HepG2 (cell line): ENCODE measurements at regions of chr5 and their contacts with region 1.

Region 1: DNA sequence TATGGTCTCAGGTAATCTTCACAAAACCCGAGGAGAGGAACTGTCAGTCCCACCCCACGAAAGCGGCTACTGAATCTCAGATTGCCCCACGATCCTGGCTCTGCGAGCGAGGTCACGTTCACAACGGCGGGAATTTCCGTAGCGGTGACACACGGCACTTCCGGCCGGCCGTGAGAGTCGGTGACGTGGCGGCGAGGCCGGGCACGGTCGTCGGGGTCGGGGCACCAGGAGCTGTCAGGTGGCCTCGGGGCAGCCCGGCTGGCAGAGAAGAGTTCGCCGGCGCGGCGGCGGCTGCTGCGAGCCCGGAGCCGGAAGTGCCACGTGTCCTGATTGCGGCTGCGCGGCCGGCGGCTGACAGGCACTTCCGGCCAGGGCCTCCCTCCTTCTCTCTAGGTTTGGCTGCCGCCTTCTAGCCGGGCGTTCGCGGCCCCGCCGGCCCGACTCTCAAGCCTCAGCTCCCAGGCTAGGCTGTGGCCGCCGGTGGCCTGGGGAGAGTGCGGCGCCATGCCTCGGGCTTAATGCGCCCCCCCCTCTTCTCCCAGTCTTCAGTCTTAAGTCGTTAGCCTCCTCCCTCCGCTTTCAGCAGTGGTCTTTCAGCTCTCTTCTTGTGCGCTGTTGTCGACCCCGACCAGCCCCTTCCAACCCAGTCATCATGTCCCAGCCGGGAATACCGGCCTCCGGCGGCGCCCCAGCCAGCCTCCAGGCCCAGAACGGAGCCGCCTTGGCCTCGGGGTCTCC is at the start of gene SEC24A:
- DNase-seq: peak; percentile 89
- ATAC-seq: peak; percentile 93
- H3K4me3 ChIP-seq: peak within 1 kb of the TSS; percentile 79 to 97 (median 97)
- H3K27ac ChIP-seq: peak within 1 kb of the TSS; percentile 99
- H3K4me1 ChIP-seq: peaks cover 67% of the 10 kb centered on the region
- H3K27me3 ChIP-seq: no peaks in the 10 kb centered on the region
- CTCF ChIP-seq: no peak; the same call in 1 of the 2 replicates
- EP300 ChIP-seq: peak in 1 of 2 experiments; percentile 46; a peak in 1 of 4 replicates
- POLR2A ChIP-seq: peak; percentile 69 to 88
- RAD21 ChIP-seq: peak; percentile 71
- total RNA-seq, gene SEC24A: 30.5 and 56.6 TPM in 2 replicates

Region 2: DNA sequence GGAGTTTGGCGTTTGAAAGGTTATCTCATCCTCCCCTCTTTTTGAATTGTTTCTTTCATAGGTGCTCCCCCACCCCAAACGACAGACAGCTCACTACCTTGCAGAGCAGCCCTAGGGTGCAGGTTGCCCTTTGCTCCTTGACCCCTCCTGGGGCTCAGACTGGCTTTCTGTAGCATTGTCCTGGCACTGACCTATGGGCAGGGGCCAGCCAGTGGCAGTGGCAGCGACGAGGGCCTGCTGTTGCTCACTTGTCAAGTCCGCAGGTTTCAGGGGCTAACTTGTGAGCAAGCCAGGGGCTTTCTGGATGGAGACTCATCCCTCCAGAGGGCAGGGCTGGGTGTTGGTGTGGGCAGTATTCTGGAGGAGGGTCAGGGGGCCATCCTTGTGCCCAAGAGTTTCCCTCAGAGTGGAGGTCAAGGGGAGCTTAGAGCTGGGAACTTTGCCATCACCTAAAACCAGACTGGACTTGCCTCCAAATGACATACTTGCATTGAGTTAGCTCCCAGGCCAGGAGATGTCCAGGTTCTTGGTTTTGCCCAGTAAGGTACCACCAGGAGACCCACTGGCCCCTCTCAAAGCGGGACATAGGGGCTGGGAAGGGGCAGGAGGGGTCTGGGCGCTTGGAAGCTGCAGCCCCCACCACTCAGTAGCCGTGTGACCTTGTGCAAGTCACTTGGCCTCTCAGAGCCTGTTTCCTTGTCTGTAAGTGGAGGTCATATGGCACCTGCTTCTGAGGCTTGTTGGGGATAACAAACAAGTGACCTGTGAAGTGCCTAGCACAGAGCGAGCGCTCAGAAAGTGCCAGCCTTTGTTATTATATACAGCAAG is 183.4 kb before region 1 on chr5:
- CTCF ChIA-PET with region 1: no interaction called
- POLR2A ChIA-PET with region 1: no interaction called
- in situ Hi-C with region 1: no loop called
- intact Hi-C with region 1: no loop called
- DNase-seq: peak; percentile 8
- ATAC-seq: peak; percentile 25
- H3K4me3 ChIP-seq: peak overlapping the region; percentile 81 to 83 (median 82)
- H3K27ac ChIP-seq: peak overlapping the region; percentile 95
- H3K4me1 ChIP-seq: peaks cover 31% of the 10 kb centered on the region
- H3K27me3 ChIP-seq: peaks cover 0 to 8% of the 10 kb centered on the region in 2 experiments; a peak in 3 of 5 replicates
- CTCF ChIP-seq: no peak
- EP300 ChIP-seq: no peak
- POLR2A ChIP-seq: no peak
- RAD21 ChIP-seq: no peak

Region 3: DNA sequence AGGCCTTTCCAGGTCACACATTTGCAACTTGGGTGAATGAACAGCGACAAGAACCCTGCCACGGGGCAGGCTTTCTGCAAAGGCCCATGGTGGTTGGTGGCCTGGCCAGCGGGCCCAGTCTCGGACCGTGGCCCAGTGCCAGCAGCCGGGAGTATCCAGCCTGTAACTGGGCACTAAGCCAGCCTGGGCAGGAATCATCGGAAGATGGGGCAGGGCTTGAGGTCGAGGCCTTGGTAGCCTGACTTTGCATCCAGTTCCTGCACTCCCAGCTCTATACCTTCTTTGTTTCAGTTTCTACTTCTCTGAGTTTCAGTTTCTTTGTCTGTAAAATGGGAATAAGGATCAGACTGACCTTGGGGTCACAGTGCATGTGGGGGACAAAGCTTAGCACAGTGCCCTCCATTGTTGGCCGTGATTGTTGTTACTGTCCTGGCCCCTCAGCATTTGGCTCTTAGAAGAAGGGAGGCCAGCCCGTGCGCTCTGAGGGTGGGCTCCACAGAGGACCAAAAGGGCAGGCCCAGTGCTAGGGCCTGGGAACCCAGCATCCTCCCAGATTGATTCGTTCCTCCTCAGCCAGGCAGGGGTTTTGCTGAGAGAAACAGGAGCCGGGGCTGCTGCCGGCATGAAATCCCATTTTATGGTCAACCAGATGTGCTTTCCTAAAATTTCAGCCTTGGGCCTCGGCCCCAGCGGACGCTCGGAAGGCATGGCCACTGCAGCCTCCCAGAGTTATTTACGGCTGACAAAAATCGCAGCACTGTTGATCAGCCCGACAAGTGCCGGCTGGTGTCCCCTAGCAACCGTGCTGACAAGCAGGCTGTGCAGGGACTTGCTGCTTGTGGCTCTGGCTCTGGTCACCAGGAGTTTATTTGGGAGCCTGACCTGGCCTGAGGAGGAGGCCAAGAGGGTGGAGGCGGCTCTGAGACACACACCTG is 79.6 kb before region 1 on chr5:
- CTCF ChIA-PET with region 1: no interaction called
- POLR2A ChIA-PET with region 1: no interaction called
- in situ Hi-C with region 1: no loop called
- intact Hi-C with region 1: no loop called
- DNase-seq: no peak
- ATAC-seq: no peak
- H3K4me3 ChIP-seq: no peak overlapping the region
- H3K27ac ChIP-seq: no peak overlapping the region
- H3K4me1 ChIP-seq: no peaks in the 10 kb centered on the region
- H3K27me3 ChIP-seq: no peaks in the 10 kb centered on the region
- CTCF ChIP-seq: no peak
- EP300 ChIP-seq: no peak
- POLR2A ChIP-seq: no peak
- RAD21 ChIP-seq: no peak

Region 4: GRCh38 chr5:134637161-134637582 is 11.4 kb before region 1 on chr5:
- CTCF ChIA-PET with region 1: interaction called, 3 read pairs
- POLR2A ChIA-PET with region 1: interaction called, 47 read pairs
- in situ Hi-C with region 1: no loop called
- intact Hi-C with region 1: loop called (anchors 1 kb)
- DNase-seq: no peak
- ATAC-seq: no peak
- H3K4me3 ChIP-seq: no peak overlapping the region
- H3K27ac ChIP-seq: peak overlapping the region; percentile 76
- H3K4me1 ChIP-seq: peaks cover 77% of the 10 kb centered on the region
- H3K27me3 ChIP-seq: no peaks in the 10 kb centered on the region; a peak in 1 of 5 replicates
- CTCF ChIP-seq: no peak
- EP300 ChIP-seq: no peak
- POLR2A ChIP-seq: no peak
- RAD21 ChIP-seq: no peak

Region 5: DNA sequence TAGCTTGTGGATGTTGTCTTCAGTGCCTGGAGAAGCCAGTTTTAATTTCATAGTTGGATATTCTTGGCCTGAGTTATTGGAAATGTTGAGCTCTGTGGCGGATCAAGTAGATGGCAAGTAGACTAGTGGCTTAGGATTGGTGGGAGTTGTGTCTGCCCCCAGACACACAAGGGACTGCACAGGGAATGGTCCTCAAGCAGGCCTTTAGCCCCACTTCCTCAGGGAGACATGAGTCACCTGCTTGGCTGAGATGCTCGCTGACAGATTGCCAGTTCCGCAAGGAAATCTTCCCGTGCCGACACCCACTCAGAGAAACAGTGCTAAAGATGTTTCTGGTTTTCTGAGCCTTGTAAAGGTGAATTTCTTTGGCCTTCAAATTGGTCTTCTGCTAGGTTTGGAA is 300.3 kb after region 1 on chr5:
- CTCF ChIA-PET with region 1: no interaction called
- POLR2A ChIA-PET with region 1: no interaction called
- in situ Hi-C with region 1: no loop called
- intact Hi-C with region 1: no loop called
- DNase-seq: no peak
- ATAC-seq: no peak
- H3K4me3 ChIP-seq: no peak overlapping the region
- H3K27ac ChIP-seq: no peak overlapping the region
- H3K4me1 ChIP-seq: no peaks in the 10 kb centered on the region
- H3K27me3 ChIP-seq: no peaks in the 10 kb centered on the region
- CTCF ChIP-seq: no peak
- EP300 ChIP-seq: no peak
- POLR2A ChIP-seq: no peak
- RAD21 ChIP-seq: no peak